Mammary epithelial cell (primary cell): ENCODE measurements at regions of chr10 and their contacts with region 1.

Region 1: GRCh38 chr10:66836057-66836456 is 89.8 kb upstream of the LRRTM3 start:
- DNase-seq: peak; percentile 68
- H3K4me3 ChIP-seq: no peak overlapping the region
- H3K27ac ChIP-seq: peak overlapping the region; percentile 64
- H3K4me1 ChIP-seq: peaks cover 43% of the 10 kb centered on the region
- H3K27me3 ChIP-seq: no peaks in the 10 kb centered on the region
- CTCF ChIP-seq: no peak

Region 2: DNA sequence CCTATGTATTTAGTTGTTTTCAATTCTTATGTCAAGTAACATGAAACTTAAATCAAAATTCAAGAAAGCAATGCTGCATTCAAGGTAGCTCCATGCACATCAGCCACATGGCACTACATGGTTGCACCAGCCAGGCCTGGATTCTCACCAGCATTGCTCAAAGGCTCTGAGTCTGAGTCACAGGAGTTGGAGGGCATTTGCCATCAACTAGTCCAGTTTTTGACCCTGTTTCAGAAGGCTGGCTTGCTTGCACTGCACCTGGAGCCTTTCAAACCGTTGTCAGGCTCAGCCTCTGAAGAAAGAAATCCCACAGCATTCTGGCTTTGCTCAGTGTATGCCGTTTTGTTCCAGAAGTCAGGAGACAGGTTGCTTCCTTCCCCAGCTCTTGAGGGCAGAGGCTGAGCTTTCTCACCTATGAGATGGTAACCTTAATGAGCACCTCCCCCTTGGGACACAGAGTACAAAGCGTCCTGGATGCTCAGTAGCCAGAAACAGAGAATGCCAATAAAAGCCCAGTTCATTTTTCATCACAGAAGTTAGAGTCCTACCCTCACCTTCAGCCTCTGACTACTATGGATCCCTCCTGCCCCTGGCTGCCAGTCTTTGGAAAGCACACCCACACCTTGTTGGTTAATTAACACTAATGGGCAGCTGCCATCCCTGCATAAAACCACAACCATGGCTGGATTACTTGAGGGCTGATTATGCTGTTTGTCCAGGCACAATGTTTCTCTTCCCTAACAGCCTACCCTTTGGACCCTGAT is 198.6 kb before region 1 on chr10:
- CTCF ChIA-PET with region 1: no interaction called
- dilution Hi-C with region 1: no loop called
- in situ Hi-C with region 1: no loop called
- intact Hi-C with region 1: loop called (anchors 10 kb)
- DNase-seq: peak; percentile 28
- H3K4me3 ChIP-seq: no peak overlapping the region
- H3K27ac ChIP-seq: no peak overlapping the region
- H3K4me1 ChIP-seq: peaks cover 14% of the 10 kb centered on the region
- H3K27me3 ChIP-seq: no peaks in the 10 kb centered on the region
- CTCF ChIP-seq: no peak